CD14-positive monocyte (primary cell): ENCODE measurements at regions of chr12 and their contacts with region 1.

Region 1: GRCh38 chr12:128853575-128854197 is 408 bp downstream of the GLT1D1 start:
- DNase-seq: peak in 1 of 3 donors; percentile 29
- H3K4me3 ChIP-seq: peak overlapping the region; percentile 68 to 94 (median 73)
- H3K4me3 Mint-ChIP-seq: peak overlapping the region; percentile 74 to 94
- H3K27ac ChIP-seq: peak overlapping the region; percentile 93 to 98
- H3K27ac Mint-ChIP-seq: peak overlapping the region; percentile 91 to 99 (median 98)
- H3K4me1 ChIP-seq: peaks cover 55 to 56% of the 10 kb centered on the region in 2 donors
- H3K4me1 Mint-ChIP-seq: peaks cover 57% of the 10 kb centered on the region
- H3K27me3 ChIP-seq: no peaks in the 10 kb centered on the region
- H3K27me3 Mint-ChIP-seq: peaks cover 0 to 9% (median 6%) of the 10 kb centered on the region in 3 donors
- CTCF ChIP-seq: no peak

Region 2: GRCh38 chr12:128817111-128818015 is 36.3 kb before region 1 on chr12:
- intact Hi-C with region 1: loop called (anchors 5 kb)
- DNase-seq: peak; percentile 66 to 84 (median 67)
- H3K4me3 ChIP-seq: peak overlapping the region in 1 of 3 experiments; percentile 41
- H3K4me3 Mint-ChIP-seq: peak overlapping the region; percentile 18 to 69
- H3K27ac ChIP-seq: peak overlapping the region; percentile 82
- H3K27ac Mint-ChIP-seq: peak overlapping the region; percentile 87 to 94 (median 92)
- H3K4me1 ChIP-seq: peaks cover 61 to 68% of the 10 kb centered on the region in 2 donors
- H3K4me1 Mint-ChIP-seq: peaks cover 63% of the 10 kb centered on the region
- H3K27me3 ChIP-seq: no peaks in the 10 kb centered on the region
- H3K27me3 Mint-ChIP-seq: no peaks in the 10 kb centered on the region
- CTCF ChIP-seq: no peak

Region 3: GRCh38 chr12:128823916-128824839 is 29.5 kb before region 1 on chr12 and contains the start of gene SLC15A4:
- intact Hi-C with region 1: loop called (anchors 5 kb)
- DNase-seq: peak; percentile 88 to 91 (median 89)
- H3K4me3 ChIP-seq: peak within 1 kb of the TSS; percentile 60 to 82 (median 71)
- H3K4me3 Mint-ChIP-seq: peak within 1 kb of the TSS; percentile 86 to 90
- H3K27ac ChIP-seq: peak within 1 kb of the TSS; percentile 85 to 91
- H3K27ac Mint-ChIP-seq: peak within 1 kb of the TSS; percentile 86 to 96 (median 93)
- H3K4me1 ChIP-seq: peaks cover 59 to 60% of the 10 kb centered on the region in 2 donors
- H3K4me1 Mint-ChIP-seq: peaks cover 49% of the 10 kb centered on the region
- H3K27me3 ChIP-seq: no peaks in the 10 kb centered on the region
- H3K27me3 Mint-ChIP-seq: peaks cover 0 to 2% (median 1%) of the 10 kb centered on the region in 3 donors
- CTCF ChIP-seq: no peak
- polyA plus RNA-seq, gene SLC15A4: 5.4 to 46.6 (median 14.8) TPM

Region 4: GRCh38 chr12:128914908-128915563 is 61.4 kb after region 1 on chr12:
- intact Hi-C with region 1: loop called in 1 of 2 experiments (anchors 5 kb)
- DNase-seq: peak; percentile 56 to 75 (median 62)
- H3K4me3 ChIP-seq: no peak overlapping the region
- H3K4me3 Mint-ChIP-seq: no peak overlapping the region
- H3K27ac ChIP-seq: no peak overlapping the region
- H3K27ac Mint-ChIP-seq: peak overlapping the region in 6 of 7 donors; percentile 43 to 71 (median 62)
- H3K4me1 ChIP-seq: peaks cover 19 to 20% of the 10 kb centered on the region in 2 donors
- H3K4me1 Mint-ChIP-seq: peaks cover 32% of the 10 kb centered on the region
- H3K27me3 ChIP-seq: no peaks in the 10 kb centered on the region
- H3K27me3 Mint-ChIP-seq: peaks cover 0 to 1% (median 0%) of the 10 kb centered on the region in 3 donors
- CTCF ChIP-seq: no peak